HAP-1 (cell line): ENCODE measurements at regions of chr14 and their contacts with region 1.

Region 1: GRCh38 chr14:30906752-30907658 is 32.6 kb downstream of the COCH start:
- DNase-seq: peak in 1 of 2 experiments; percentile 34
- H3K4me3 ChIP-seq: no peak overlapping the region
- H3K4me1 ChIP-seq: no peaks in the 10 kb centered on the region
- H3K27me3 ChIP-seq: no peaks in the 10 kb centered on the region

Region 2: GRCh38 chr14:30656190-30656632 is 250.8 kb before region 1 on chr14:
- in situ Hi-C with region 1: loop called (anchors 10 kb)
- DNase-seq: peak; percentile 52 to 61
- H3K4me3 ChIP-seq: no peak overlapping the region
- H3K4me1 ChIP-seq: no peaks in the 10 kb centered on the region
- H3K27me3 ChIP-seq: no peaks in the 10 kb centered on the region